ENCODE measurements at regions of chr3 and their contacts with region 1.

Region 1: GRCh38 chr3:52154117-52155094 is at the start of gene POC1A:
- DNase-seq: peak; percentile 85 to 95 (median 88)
- ATAC-seq: peak; percentile 97
- H3K4me3 ChIP-seq: peak within 1 kb of the TSS; percentile 95
- H3K27ac ChIP-seq: peak within 1 kb of the TSS; percentile 69
- H3K4me1 ChIP-seq: peaks cover 10 to 11% of the 10 kb centered on the region in 2 experiments; a peak in 4 of 5 replicates
- H3K27me3 ChIP-seq: no peaks in the 10 kb centered on the region
- CTCF ChIP-seq: no peak
- EP300 ChIP-seq: no peak
- POLR2A ChIP-seq: peak; percentile 59
- RAD21 ChIP-seq: no peak
- polyA plus RNA-seq, gene POC1A: 7.2 to 9.4 TPM

Region 2: DNA sequence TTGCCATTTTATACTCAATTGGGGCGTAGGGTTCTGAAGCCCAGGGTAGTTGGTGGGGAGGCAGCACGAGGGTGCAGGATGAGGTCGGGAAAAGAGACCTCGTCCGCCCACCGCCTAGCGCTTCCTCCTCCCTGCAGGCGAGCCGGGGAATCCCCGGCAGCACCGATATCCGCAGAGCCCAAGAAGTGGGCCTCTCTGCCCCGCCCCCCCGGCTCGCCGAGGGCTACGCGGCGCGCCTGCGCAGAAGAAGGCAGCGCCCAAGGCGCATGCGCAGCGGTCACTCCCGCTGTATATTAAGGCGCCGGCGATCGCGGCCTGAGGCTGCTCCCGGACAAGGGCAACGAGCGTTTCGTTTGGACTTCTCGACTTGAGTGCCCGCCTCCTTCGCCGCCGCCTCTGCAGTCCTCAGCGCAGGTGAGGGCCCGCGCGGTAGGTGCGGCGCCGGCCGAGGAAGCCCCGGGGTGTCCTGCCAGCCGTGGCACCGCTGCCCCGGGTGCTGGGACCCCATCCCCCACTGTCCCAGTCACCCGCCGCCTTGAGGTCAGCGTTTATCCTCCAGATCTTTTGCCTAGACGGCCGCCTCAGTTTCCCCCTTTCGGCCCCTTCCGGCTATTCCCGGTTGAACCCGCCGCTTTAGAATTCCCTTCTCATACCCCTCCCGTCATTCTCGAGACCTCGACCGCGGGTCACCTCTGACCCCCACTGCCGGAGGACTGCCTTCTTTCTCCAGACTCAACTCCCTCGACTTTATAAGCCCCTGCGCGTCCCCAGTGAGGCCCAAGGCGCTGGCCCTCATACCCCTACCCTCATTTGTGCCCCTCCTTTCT is 43.6 kb after region 1 on chr3 and contains the start of gene ALAS1:
- CTCF ChIA-PET with region 1: interaction called, 3 read pairs
- POLR2A ChIA-PET with region 1: interaction called, 4 read pairs
- in situ Hi-C with region 1: no loop called
- intact Hi-C with region 1: loop called (anchors 2 kb)
- DNase-seq: peak; percentile 93 to 97 (median 96)
- ATAC-seq: peak; percentile 97
- H3K4me3 ChIP-seq: peak within 1 kb of the TSS; percentile 77
- H3K27ac ChIP-seq: peak within 1 kb of the TSS; percentile 80
- H3K4me1 ChIP-seq: peaks cover 22 to 31% of the 10 kb centered on the region in 2 experiments; a peak in 4 of 5 replicates
- H3K27me3 ChIP-seq: no peaks in the 10 kb centered on the region
- CTCF ChIP-seq: peak; percentile 13 to 27 (median 13); a peak in 2 of 6 replicates
- EP300 ChIP-seq: no peak
- POLR2A ChIP-seq: peak; percentile 86
- RAD21 ChIP-seq: peak in 1 of 2 experiments; percentile 24; a peak in 1 of 4 replicates
- polyA plus RNA-seq, gene ALAS1: 37.8 to 49.5 TPM

Measured in K562 (cell line).